Dendritic cell treated with granulocyte-macrophage colony-stimulating factor and Interleukin-4, amounts not matched to agents 40 ng/mL and 50 ng/mL, for 4 days (primary cell): ENCODE measurements at regions of chr3 and their contacts with region 1.

Region 1: GRCh38 chr3:143972505-143973255 is 1.1 kb downstream of the DIPK2A start:
- H3K4me3 Mint-ChIP-seq: peak overlapping the region; percentile 99
- H3K27ac Mint-ChIP-seq: peak overlapping the region; percentile 97
- H3K4me1 Mint-ChIP-seq: peaks cover 21% of the 10 kb centered on the region
- H3K27me3 Mint-ChIP-seq: no peaks in the 10 kb centered on the region

Region 2: DNA sequence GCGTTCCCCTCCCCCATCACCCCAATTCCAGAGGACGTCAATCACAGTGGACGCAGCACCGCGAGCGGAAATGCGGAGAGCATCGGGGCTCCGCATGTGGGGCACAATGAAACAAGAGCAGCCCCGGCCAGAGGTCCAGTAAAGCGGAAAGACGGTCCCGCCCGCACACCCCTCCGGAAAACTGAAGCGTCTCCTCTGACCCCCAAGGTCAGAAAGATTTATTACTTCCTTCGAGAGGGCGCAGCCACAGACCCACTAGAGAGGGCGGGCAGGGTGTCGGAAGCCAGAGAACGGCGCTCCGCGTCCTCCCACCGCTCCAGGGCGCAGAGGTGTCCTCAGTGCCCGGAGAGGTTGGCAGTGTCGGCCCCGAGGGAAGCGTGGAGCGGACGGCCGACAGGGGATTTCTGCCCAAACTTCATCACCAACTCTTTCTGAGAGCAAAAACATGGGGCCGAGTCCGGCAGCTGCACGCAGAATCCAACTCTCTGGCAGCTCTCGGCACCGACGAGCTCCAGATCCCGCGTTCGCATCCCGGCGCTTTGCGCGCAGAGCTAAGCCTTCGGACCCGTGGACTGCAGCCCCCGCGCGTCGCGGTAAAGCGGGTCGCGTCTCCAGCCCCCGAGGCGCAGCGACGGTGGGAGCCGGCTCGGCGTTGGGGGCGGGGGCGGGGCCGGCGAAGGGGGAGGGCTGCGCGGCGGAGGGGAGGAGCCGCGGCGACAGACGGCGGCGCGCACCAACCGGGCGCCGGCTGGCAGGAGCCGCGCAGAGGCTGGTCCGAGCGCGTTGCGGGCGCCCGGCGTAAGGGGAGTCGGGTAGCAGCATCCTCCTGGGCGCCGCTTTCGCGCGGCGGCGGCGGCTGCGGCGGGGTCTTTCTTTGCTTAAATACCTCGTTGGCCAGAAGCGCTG is 853.4 kb before region 1 on chr3 and contains the start of gene CHST2:
- intact Hi-C with region 1: loop called (anchors 10 kb)
- H3K4me3 Mint-ChIP-seq: peak within 1 kb of the TSS; percentile 84
- H3K27ac Mint-ChIP-seq: peak within 1 kb of the TSS; percentile 80
- H3K4me1 Mint-ChIP-seq: peaks cover 29% of the 10 kb centered on the region
- H3K27me3 Mint-ChIP-seq: peaks cover 21% of the 10 kb centered on the region

Region 3: GRCh38 chr3:143831208-143831607 is 141.5 kb before region 1 on chr3:
- intact Hi-C with region 1: loop called (anchors 5 kb)
- H3K4me3 Mint-ChIP-seq: no peak overlapping the region
- H3K27ac Mint-ChIP-seq: peak overlapping the region; percentile 15
- H3K4me1 Mint-ChIP-seq: peaks cover 62% of the 10 kb centered on the region
- H3K27me3 Mint-ChIP-seq: no peaks in the 10 kb centered on the region

Region 4: GRCh38 chr3:143998266-143998665 is 25.6 kb after region 1 on chr3:
- intact Hi-C with region 1: loop called (anchors 1 kb)
- H3K4me3 Mint-ChIP-seq: no peak overlapping the region
- H3K27ac Mint-ChIP-seq: no peak overlapping the region
- H3K4me1 Mint-ChIP-seq: peaks cover 29% of the 10 kb centered on the region
- H3K27me3 Mint-ChIP-seq: peaks cover 12% of the 10 kb centered on the region

Region 5: DNA sequence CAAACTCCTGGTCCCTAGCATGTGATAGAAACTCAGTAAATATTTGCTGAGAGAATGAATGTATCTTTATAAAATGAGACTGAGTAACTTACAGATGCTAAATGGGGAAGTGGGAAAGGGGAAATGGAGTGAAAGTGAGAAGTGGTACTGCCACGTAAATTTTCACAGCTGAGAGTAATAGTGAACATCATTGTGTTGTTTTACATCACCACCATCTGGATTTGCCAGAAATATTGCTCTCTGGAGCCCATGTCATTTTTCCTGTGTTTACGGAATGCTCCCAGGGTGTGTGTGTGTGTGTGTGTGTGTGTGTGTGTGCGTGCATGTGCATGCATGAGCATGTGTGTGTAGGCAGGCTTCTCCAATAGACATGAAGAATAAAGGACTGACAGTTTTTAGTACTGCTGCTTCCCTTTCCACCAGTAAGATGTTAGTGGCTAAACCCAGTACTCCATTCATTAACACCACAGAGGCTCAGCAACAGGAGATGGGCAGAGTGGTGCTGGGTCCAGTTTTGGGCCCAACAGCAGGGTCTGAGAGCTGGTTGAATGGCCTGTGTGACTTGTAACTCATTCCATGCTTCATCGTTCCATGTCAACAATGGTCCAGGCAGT is 56.2 kb after region 1 on chr3:
- intact Hi-C with region 1: loop called (anchors 2 kb)
- H3K4me3 Mint-ChIP-seq: no peak overlapping the region
- H3K27ac Mint-ChIP-seq: peak overlapping the region; percentile 43
- H3K4me1 Mint-ChIP-seq: peaks cover 24% of the 10 kb centered on the region
- H3K27me3 Mint-ChIP-seq: peaks cover 11% of the 10 kb centered on the region

Region 6: GRCh38 chr3:144259267-144259666 is 286.6 kb after region 1 on chr3:
- intact Hi-C with region 1: loop called (anchors 10 kb)
- H3K4me3 Mint-ChIP-seq: no peak overlapping the region
- H3K27ac Mint-ChIP-seq: no peak overlapping the region
- H3K4me1 Mint-ChIP-seq: peaks cover 4% of the 10 kb centered on the region
- H3K27me3 Mint-ChIP-seq: peaks cover 10% of the 10 kb centered on the region

Region 7: DNA sequence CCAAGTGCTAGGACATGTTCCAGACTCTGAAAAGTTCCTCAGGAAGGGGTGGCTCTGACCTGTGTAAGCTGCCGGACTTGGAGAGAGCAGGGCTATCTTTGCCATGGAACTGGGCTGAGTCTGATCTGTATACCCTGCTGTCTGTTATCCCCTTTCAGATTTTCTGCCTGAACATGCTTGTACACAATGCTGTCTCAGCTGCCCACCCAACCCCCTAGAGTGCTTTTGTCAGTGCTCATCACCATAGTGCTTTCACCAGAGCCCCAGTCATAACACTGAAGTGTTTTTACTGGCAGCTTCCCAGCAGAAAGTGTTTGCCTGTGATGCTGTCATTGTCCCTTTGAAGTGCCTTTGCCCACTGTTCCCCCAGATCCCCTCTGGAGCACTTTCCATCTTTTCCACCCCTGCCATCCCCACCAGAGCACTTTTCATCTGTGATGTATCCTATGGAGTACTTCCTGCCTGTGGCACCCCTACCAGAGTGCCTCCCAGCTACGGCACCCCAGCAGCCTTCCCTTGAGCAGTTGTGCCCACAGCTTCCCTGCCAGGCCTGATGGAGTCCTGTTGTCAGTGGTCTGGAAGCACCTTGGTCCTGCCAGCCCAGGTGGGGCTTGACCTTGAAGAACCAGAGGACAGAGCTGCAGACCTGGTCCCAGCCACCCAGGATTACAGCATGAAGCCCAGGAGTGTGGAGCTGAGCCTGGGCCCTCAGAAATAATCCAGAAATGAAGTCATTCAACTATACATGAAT is 396.6 kb after region 1 on chr3:
- intact Hi-C with region 1: no loop called
- H3K4me3 Mint-ChIP-seq: no peak overlapping the region
- H3K27ac Mint-ChIP-seq: no peak overlapping the region
- H3K4me1 Mint-ChIP-seq: no peaks in the 10 kb centered on the region
- H3K27me3 Mint-ChIP-seq: no peaks in the 10 kb centered on the region

Region 8: DNA sequence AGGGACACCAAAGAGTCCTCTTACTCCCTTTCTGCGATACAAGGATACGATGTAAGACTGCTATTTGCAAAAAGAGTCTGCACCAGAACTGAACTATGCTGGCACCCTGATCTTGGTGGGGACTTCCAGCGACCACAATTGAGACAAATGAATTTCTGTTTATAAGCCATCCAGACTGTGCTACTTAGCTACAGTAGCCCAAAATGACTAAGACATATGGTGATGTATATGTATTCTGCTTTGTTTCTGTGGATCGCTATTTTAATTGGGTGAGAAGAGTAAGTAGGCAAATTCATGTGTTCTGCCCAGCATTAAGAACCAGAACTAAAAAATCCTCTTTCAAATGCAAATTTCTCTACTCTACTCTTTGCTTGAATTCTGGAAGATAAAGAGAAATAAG is 719.8 kb after region 1 on chr3:
- intact Hi-C with region 1: no loop called
- H3K4me3 Mint-ChIP-seq: no peak overlapping the region
- H3K27ac Mint-ChIP-seq: no peak overlapping the region
- H3K4me1 Mint-ChIP-seq: no peaks in the 10 kb centered on the region
- H3K27me3 Mint-ChIP-seq: no peaks in the 10 kb centered on the region

Region 9: DNA sequence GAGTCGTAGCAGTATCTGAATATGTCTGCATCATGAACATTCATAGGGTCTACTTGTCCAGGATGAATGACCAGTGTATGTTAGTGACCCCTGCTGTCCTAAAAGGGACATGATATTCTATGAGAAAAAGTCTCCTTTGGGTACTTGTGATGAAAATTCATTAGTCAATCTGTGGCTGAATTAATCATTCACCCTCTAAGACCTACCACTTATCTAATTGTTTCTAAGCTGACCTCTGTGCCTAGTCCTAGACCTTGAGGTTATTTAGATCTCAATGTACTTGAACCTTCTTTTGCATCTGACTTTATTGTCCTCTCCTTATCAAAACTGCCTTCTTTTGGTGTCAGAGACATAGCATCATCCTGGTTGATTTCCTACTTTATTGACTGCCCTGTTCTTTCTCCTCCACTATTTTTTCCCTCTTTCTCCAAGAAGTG is 798.3 kb after region 1 on chr3:
- intact Hi-C with region 1: loop called (anchors 5 kb)
- H3K4me3 Mint-ChIP-seq: no peak overlapping the region
- H3K27ac Mint-ChIP-seq: no peak overlapping the region
- H3K4me1 Mint-ChIP-seq: peaks cover 8% of the 10 kb centered on the region
- H3K27me3 Mint-ChIP-seq: no peaks in the 10 kb centered on the region